ENCODE measurements at regions of chr2 and their contacts with region 1.

Region 1: DNA sequence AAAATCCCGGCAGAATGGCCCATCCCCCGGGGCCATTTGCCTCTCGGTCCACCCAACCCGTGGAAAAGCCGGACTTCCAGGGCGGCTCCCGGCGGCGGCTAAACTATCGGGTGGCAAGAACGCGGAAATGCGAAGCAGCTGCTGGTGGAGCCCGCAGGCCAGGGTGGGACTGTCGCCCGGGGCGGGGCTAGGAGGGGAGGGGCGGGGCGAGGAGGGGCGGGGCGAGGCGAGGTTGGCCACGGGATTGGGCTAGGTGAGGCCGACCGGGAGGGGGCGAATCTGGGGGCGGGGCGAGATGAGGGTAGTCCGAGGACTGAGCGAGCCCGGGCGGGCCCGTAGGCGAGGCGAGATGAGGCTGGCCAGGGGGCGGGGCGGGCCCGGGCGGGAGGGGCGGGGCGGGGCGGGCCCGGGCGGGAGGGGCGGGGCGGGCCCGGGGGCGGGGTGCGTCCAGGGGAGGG is 315 bp upstream of the SLC66A3 start:
- DNase-seq: peak; percentile 98 to 99
- H3K4me3 ChIP-seq: peak overlapping the region; percentile 58 to 72
- H3K27ac ChIP-seq: peak overlapping the region; percentile 84 to 93
- H3K4me1 ChIP-seq: peaks cover 0 to 7% of the 10 kb centered on the region in 2 donors
- H3K27me3 ChIP-seq: no peaks in the 10 kb centered on the region
- CTCF ChIP-seq: no peak
- POLR2A ChIP-seq: no peak

Region 2: GRCh38 chr2:11097038-11097720 is 57.8 kb before region 1 on chr2:
- intact Hi-C with region 1: no loop called
- DNase-seq: no peak
- H3K4me3 ChIP-seq: no peak overlapping the region
- H3K27ac ChIP-seq: no peak overlapping the region
- H3K4me1 ChIP-seq: no peaks in the 10 kb centered on the region
- H3K27me3 ChIP-seq: no peaks in the 10 kb centered on the region
- CTCF ChIP-seq: no peak
- POLR2A ChIP-seq: no peak

Region 3: GRCh38 chr2:11437602-11438001 is 282.6 kb after region 1 on chr2:
- intact Hi-C with region 1: no loop called
- DNase-seq: no peak
- H3K4me3 ChIP-seq: no peak overlapping the region
- H3K27ac ChIP-seq: no peak overlapping the region
- H3K4me1 ChIP-seq: no peaks in the 10 kb centered on the region
- H3K27me3 ChIP-seq: no peaks in the 10 kb centered on the region
- CTCF ChIP-seq: no peak
- POLR2A ChIP-seq: no peak

Region 4: GRCh38 chr2:11477994-11478393 is 323.0 kb after region 1 on chr2:
- intact Hi-C with region 1: no loop called
- DNase-seq: peak; percentile 87 to 95
- H3K4me3 ChIP-seq: no peak overlapping the region
- H3K27ac ChIP-seq: peak overlapping the region; percentile 33 to 88
- H3K4me1 ChIP-seq: peaks cover 0 to 5% of the 10 kb centered on the region in 2 donors
- H3K27me3 ChIP-seq: no peaks in the 10 kb centered on the region
- CTCF ChIP-seq: peak; percentile 85 to 95 (median 88)
- POLR2A ChIP-seq: no peak

Region 5: GRCh38 chr2:11583840-11584524 is 429.0 kb after region 1 on chr2:
- intact Hi-C with region 1: loop called (anchors 10 kb)
- DNase-seq: peak; percentile 88 to 94
- H3K4me3 ChIP-seq: no peak overlapping the region
- H3K27ac ChIP-seq: peak overlapping the region; percentile 80 to 89
- H3K4me1 ChIP-seq: peaks cover 0 to 6% of the 10 kb centered on the region in 2 donors
- H3K27me3 ChIP-seq: no peaks in the 10 kb centered on the region
- CTCF ChIP-seq: peak; percentile 89 to 94 (median 92)
- POLR2A ChIP-seq: no peak

Measured in uterus (tissue), 4 donors.